GM12878 (cell line): ENCODE measurements at regions of chr7 and their contacts with region 1.

Region 1: DNA sequence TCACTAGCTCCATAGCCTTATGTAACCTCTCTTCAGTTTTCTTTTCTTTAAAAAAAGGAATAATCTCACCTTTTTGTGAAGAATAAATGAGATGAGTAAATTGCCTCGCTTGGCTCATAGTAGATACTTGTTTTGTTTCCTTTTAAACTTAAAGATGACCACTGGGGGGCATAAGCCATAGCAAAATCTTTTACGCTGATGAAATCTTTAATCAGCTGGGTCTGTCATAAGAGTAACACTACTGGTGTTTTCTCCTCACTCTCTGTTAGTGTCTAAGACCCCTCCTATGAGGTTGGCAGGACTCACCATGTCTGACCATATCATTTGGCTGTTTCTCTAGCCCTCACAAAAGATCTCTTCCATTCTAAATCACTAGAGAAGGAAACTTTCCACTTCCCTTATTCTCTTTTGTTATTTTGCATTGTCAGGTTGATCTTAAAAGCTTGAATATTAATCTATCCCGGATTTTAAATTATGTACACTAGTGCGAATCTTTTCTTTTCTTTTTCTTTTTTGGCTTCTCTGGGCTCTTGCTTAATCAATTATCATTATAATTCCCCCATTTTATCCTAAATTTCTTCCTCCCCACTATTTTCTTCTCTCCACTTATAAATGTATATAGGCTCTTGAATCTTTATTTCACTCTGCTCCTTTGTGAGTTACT is 12.5 kb downstream of the STAG3 start:
- DNase-seq: no peak
- ATAC-seq: peak; percentile 83
- H3K4me3 ChIP-seq: no peak overlapping the region
- H3K27ac ChIP-seq: no peak overlapping the region
- H3K4me1 ChIP-seq: peaks cover 29% of the 10 kb centered on the region
- H3K27me3 ChIP-seq: no peaks in the 10 kb centered on the region
- CTCF ChIP-seq: peak; percentile 42 to 55 (median 44); a peak in 5 of 6 replicates
- EP300 ChIP-seq: no peak
- POLR2A ChIP-seq: no peak
- RAD21 ChIP-seq: peak; percentile 71

Region 2: GRCh38 chr7:100148559-100149350 is 41.4 kb before region 1 on chr7 and contains the start of gene LAMTOR4:
- CTCF ChIA-PET with region 1: interaction called, 11 read pairs
- POLR2A ChIA-PET with region 1: interaction called, 5 read pairs
- RAD21 ChIA-PET with region 1: interaction called, 4 read pairs
- SMC1A ChIA-PET with region 1: interaction called, 3 read pairs
- in situ Hi-C with region 1: no loop called
- intact Hi-C with region 1: no loop called
- DNase-seq: peak; percentile 100
- ATAC-seq: peak; percentile 99
- H3K4me3 ChIP-seq: peak within 1 kb of the TSS; percentile 99
- H3K27ac ChIP-seq: peak within 1 kb of the TSS; percentile 86
- H3K4me1 ChIP-seq: peaks cover 5% of the 10 kb centered on the region; the same call in 1 of the 2 replicates
- H3K27me3 ChIP-seq: no peaks in the 10 kb centered on the region
- CTCF ChIP-seq: 0 out of 6 replicates have a peak, but pooled peaks of 1 of the 3 experiments have one; percentile 13
- EP300 ChIP-seq: peak in 1 of 2 experiments; percentile 14; a peak in 1 of 4 replicates
- POLR2A ChIP-seq: peak; percentile 91
- RAD21 ChIP-seq: no peak
- polyA plus RNA-seq, gene LAMTOR4: 188 to 262 TPM

Region 3: GRCh38 chr7:100200693-100201092 is 10.5 kb after region 1 on chr7:
- CTCF ChIA-PET with region 1: interaction called, 26 read pairs
- POLR2A ChIA-PET with region 1: interaction called, 10 read pairs
- RAD21 ChIA-PET with region 1: interaction called, 14 read pairs
- SMC1A ChIA-PET with region 1: interaction called, 140 read pairs
- in situ Hi-C with region 1: no loop called
- intact Hi-C with region 1: no loop called
- DNase-seq: no peak
- ATAC-seq: no peak
- H3K4me3 ChIP-seq: no peak overlapping the region
- H3K27ac ChIP-seq: no peak overlapping the region
- H3K4me1 ChIP-seq: peaks cover 25% of the 10 kb centered on the region
- H3K27me3 ChIP-seq: no peaks in the 10 kb centered on the region
- CTCF ChIP-seq: no peak
- EP300 ChIP-seq: no peak
- POLR2A ChIP-seq: no peak
- RAD21 ChIP-seq: no peak

Region 4: DNA sequence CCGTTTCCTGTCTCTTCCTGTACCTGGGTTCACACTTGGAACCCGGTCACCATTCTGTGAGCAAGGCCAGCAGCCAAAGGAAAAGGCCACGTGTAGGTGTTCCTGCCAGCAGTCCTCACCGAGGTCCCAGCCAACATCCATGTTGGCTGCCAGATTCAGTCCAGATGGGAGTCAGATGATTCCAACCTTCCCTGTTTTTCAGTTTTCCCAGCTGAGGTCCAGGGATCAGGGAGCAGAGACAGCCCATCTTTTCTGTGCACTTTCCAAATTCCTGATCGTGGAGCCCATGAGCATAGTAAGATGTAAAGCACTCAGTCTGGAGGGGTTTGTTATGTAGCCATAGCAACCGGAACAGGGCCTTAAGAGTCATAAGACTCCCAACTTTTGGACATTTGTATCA is 25.7 kb after region 1 on chr7:
- CTCF ChIA-PET with region 1: interaction called, 113 read pairs
- POLR2A ChIA-PET with region 1: interaction called, 60 read pairs
- RAD21 ChIA-PET with region 1: interaction called, 35 read pairs
- SMC1A ChIA-PET with region 1: interaction called, 140 read pairs
- in situ Hi-C with region 1: no loop called
- intact Hi-C with region 1: loop called (anchors 2 kb)
- DNase-seq: no peak
- ATAC-seq: no peak
- H3K4me3 ChIP-seq: no peak overlapping the region
- H3K27ac ChIP-seq: no peak overlapping the region
- H3K4me1 ChIP-seq: peaks cover 64% of the 10 kb centered on the region
- H3K27me3 ChIP-seq: no peaks in the 10 kb centered on the region
- CTCF ChIP-seq: no peak
- EP300 ChIP-seq: no peak
- POLR2A ChIP-seq: no peak
- RAD21 ChIP-seq: no peak

Region 5: DNA sequence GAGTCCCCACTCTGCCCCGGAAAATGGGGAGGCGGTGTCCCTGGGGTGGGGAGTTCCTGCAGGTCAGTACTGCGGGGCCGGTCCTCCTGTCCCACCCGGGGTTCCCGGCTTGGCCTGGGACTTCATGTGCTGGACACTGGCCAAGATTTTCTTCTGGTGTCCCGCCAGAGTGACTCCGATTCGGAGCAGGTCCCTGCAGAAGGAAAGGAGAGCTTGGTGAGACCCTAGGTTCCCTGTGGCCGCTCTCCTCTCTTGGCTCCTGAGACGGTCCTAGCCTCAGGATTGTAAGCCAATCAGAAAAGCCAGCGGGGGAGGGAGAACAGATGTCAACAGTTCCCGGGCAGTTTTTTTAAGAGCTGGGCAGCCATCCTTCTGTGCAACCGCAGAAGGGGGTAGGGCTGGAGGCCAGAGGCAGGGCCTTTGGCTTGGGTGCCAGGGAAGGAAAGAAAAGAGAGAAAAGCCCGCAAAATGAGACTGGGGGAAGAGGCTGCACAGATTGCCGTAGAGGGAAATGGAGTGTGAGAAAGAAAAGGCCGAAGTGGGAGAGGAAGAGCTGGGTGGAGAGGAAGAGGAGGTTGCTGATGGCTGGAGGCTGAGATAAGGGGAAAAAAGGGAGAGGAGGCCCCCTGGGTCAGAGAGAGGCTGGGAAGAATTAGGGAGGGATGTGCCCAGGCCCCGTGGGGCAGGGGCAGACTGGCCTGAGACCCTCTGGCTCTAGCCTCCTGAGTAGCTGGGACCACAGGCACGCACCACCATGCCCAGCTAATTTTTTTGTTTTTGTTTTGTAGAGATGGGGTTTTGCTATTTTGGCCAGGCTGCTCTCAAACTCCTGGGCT is 613.4 kb after region 1 on chr7:
- CTCF ChIA-PET with region 1: no interaction called
- POLR2A ChIA-PET with region 1: no interaction called
- RAD21 ChIA-PET with region 1: no interaction called
- SMC1A ChIA-PET with region 1: no interaction called
- in situ Hi-C with region 1: no loop called
- intact Hi-C with region 1: no loop called
- DNase-seq: peak; percentile 56
- ATAC-seq: peak; percentile 98
- H3K4me3 ChIP-seq: peak overlapping the region; percentile 53
- H3K27ac ChIP-seq: peak overlapping the region; percentile 80
- H3K4me1 ChIP-seq: peaks cover 15% of the 10 kb centered on the region
- H3K27me3 ChIP-seq: no peaks in the 10 kb centered on the region
- CTCF ChIP-seq: no peak
- EP300 ChIP-seq: no peak
- POLR2A ChIP-seq: peak; percentile 47; the same call in 1 of the 2 replicates
- RAD21 ChIP-seq: no peak